PC-3 (cell line): ENCODE measurements at regions of chr3 and their contacts with region 1.

Region 1: DNA sequence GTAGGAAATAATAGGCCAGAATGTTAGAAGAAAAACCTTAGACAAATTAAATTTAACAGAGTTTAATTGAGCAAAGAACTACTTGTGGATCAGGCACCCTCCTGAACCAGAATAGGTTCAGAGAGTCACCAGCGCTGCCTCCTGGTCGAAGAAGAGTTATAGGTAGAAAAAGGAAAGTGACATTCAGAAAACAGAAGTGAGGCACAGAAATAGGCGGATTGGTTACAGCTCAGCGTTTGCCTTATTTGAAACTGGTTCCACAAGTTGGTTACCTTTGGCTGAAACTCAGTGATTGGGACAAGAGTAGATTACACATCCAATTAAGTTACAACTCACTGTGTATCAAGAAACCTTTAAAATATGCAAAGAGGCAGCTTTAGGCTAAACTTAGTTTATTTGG is 4.4 kb downstream of the AADAC start:
- DNase-seq: peak; percentile 72
- ATAC-seq: no peak
- H3K4me3 ChIP-seq: no peak overlapping the region
- H3K27ac ChIP-seq: no peak overlapping the region
- H3K4me1 ChIP-seq: peaks cover 29% of the 10 kb centered on the region
- H3K27me3 ChIP-seq: no peaks in the 10 kb centered on the region
- CTCF ChIP-seq: no peak; the same call in 1 of the 2 replicates

Region 2: DNA sequence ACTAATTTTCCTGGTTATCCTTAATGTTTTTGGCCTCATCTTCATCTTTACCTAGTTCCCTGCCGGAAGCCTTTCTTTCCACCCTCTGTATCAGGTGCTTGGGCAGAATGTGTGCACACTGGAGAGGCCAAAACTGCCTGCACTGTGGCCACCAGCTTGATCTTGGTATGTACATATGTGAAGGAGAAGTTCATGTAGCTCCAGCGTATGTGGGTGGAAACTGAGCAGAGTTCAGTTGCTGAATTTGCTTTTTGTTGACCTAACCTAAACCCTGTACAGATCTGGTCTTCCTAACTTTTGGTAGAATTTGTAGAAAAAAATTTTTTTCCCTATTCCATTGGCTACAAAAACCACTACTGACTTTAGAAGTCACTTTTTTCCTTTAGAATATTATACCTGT is 291.6 kb before region 1 on chr3:
- CTCF ChIA-PET with region 1: no interaction called
- POLR2A ChIA-PET with region 1: interaction called, 10 read pairs
- intact Hi-C with region 1: no loop called
- DNase-seq: no peak
- ATAC-seq: no peak
- H3K4me3 ChIP-seq: no peak overlapping the region
- H3K27ac ChIP-seq: no peak overlapping the region
- H3K4me1 ChIP-seq: no peaks in the 10 kb centered on the region
- H3K27me3 ChIP-seq: no peaks in the 10 kb centered on the region
- CTCF ChIP-seq: no peak